ENCODE measurements at regions of chr6 and their contacts with region 1.

Region 1: DNA sequence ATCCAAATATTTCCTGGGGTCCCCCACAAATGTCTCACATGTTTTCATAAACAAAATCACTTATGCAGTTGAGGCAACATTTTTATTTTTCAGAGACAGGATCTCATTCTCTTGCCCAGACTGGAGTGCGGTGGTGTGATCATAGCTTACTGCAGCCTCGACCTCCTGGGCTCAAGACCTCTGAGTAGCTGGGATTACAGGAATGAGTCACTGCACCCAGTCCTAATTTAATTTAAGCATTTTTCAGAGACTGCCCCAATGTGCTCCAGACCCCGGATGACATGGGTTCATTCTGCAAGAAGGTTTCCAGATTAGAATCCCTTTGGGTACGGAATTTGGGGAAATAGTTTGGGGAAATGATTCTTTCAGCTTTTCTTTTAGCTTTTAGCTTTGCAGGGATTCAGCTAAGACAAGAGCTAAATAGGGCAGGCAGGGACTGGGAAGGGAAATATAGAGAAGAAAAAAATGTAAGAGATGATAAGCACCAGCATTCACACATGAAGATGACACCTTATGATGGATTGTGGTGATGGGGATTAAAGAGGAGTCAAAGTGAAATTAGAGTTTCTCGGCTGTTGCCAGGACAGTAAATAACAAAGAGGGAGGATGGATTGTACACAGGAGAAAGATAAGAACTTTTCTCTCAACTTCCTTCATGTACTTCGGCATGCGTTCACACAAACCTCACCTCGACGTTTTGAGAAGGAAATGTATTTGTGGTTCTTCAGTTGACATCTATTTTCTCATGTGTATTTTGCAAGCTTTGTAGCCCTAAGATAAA is 169.4 kb upstream of the TAB2 start:
- DNase-seq: no peak
- ATAC-seq: peak; percentile 93
- H3K4me3 ChIP-seq: no peak overlapping the region
- H3K27ac ChIP-seq: no peak overlapping the region
- H3K4me1 ChIP-seq: peaks cover 4% of the 10 kb centered on the region
- H3K27me3 ChIP-seq: no peaks in the 10 kb centered on the region
- CTCF ChIP-seq: no peak
- EP300 ChIP-seq: peak; percentile 62 to 71; a peak in 2 of 4 replicates
- POLR2A ChIP-seq: no peak
- RAD21 ChIP-seq: 0 out of 2 replicates have a peak, but pooled peaks have one; percentile 1

Region 2: DNA sequence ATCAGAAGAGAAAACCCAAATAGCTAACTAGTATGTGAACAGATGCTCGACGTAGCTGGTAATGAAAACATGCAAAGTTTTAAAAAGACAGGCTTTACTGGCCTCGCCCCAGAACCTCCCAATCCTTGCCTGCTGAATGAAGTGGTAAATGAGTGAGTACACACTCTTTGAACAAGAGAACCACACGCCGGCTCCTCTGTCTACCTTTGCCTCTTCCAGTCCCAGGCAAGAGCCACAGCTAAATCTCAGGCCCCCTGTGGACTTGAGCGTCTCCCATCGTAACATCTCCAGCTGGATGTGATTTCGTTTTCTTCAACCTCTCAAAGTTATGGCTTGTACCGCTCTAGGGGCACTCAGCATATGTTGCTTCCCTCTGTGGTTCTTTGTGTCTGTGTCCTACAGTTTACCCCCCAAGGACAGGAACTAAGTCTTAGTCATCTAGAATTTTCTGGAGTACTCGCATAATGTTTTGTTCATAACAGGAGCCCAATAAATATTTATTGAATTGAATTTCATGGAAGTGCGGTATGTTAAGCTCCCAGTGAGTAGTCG is 16.1 kb after region 1 on chr6:
- CTCF ChIA-PET with region 1: interaction called, 8 read pairs
- POLR2A ChIA-PET with region 1: interaction called, 3 read pairs
- RAD21 ChIA-PET with region 1: no interaction called
- SMC1A ChIA-PET with region 1: interaction called, 10 read pairs
- in situ Hi-C with region 1: no loop called
- intact Hi-C with region 1: no loop called
- DNase-seq: no peak
- ATAC-seq: no peak
- H3K4me3 ChIP-seq: no peak overlapping the region
- H3K27ac ChIP-seq: no peak overlapping the region
- H3K4me1 ChIP-seq: peaks cover 6% of the 10 kb centered on the region; the same call in 1 of the 2 replicates
- H3K27me3 ChIP-seq: no peaks in the 10 kb centered on the region
- CTCF ChIP-seq: no peak
- EP300 ChIP-seq: no peak
- POLR2A ChIP-seq: no peak
- RAD21 ChIP-seq: no peak

Region 3: DNA sequence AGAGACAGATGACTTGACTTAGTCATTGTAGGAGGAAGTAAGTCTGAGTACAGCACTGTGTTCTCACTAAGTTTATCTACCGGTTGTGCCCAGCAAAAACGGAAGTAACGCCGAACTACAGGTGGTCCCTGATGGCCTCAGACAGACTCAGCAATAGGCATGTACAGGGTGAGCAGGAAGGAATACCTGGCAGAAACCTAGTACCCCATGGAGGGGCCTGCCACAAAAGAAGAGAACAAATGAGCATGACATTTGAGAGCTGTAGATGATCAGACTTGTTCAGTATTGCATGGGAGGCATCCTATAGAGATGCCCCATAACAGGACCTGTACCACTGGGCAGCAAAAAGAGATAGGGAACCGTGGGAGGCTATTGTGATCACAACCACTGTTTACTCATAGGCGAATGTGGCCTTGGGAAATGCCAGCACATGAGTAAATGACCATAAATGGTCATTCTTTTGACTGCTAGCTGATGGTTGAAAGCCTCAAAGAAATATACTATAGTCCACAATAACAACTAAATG is 63.0 kb after region 1 on chr6:
- CTCF ChIA-PET with region 1: no interaction called
- POLR2A ChIA-PET with region 1: no interaction called
- RAD21 ChIA-PET with region 1: interaction called, 3 read pairs
- SMC1A ChIA-PET with region 1: interaction called, 5 read pairs
- in situ Hi-C with region 1: no loop called
- intact Hi-C with region 1: loop called (anchors 5 kb)
- DNase-seq: no peak
- ATAC-seq: peak; percentile 66
- H3K4me3 ChIP-seq: no peak overlapping the region
- H3K27ac ChIP-seq: peak overlapping the region; percentile 64
- H3K4me1 ChIP-seq: peaks cover 43% of the 10 kb centered on the region
- H3K27me3 ChIP-seq: no peaks in the 10 kb centered on the region
- CTCF ChIP-seq: no peak
- EP300 ChIP-seq: no peak
- POLR2A ChIP-seq: no peak
- RAD21 ChIP-seq: no peak